CD8-positive, alpha-beta T cell (primary cell): ENCODE measurements at regions of chr1 and their contacts with region 1.

Region 1: GRCh38 chr1:149927503-149928387 is at the start of gene SF3B4:
- DNase-seq: peak; percentile 91 to 98 (median 96)
- ATAC-seq: peak; percentile 94
- H3K4me3 ChIP-seq: peak within 1 kb of the TSS; percentile 86 to 97
- H3K4me3 Mint-ChIP-seq: peak within 1 kb of the TSS; percentile 94
- H3K27ac ChIP-seq: peak within 1 kb of the TSS; percentile 71 to 95
- H3K27ac Mint-ChIP-seq: peak within 1 kb of the TSS; percentile 91
- H3K4me1 ChIP-seq: peaks cover 34% of the 10 kb centered on the region
- H3K4me1 Mint-ChIP-seq: peaks cover 45% of the 10 kb centered on the region
- H3K27me3 ChIP-seq: no peaks in the 10 kb centered on the region
- H3K27me3 Mint-ChIP-seq: peaks cover 2% of the 10 kb centered on the region
- CTCF ChIP-seq: no peak
- total RNA-seq, gene SF3B4: 52.0 to 59.1 TPM

Region 2: GRCh38 chr1:149899460-149900293 is 28.1 kb before region 1 on chr1 and contains the start of gene BOLA1:
- CTCF ChIA-PET with region 1: no interaction called
- POLR2A ChIA-PET with region 1: interaction called, 3 read pairs
- intact Hi-C with region 1: loop called (anchors 1 kb)
- DNase-seq: peak; percentile 56 to 91 (median 85)
- ATAC-seq: peak; percentile 96
- H3K4me3 ChIP-seq: peak within 1 kb of the TSS; percentile 67 to 73
- H3K4me3 Mint-ChIP-seq: peak within 1 kb of the TSS; percentile 89
- H3K27ac ChIP-seq: peak within 1 kb of the TSS; percentile 66 to 82
- H3K27ac Mint-ChIP-seq: peak within 1 kb of the TSS; percentile 92
- H3K4me1 ChIP-seq: peaks cover 11% of the 10 kb centered on the region
- H3K4me1 Mint-ChIP-seq: peaks cover 18% of the 10 kb centered on the region
- H3K27me3 ChIP-seq: no peaks in the 10 kb centered on the region
- H3K27me3 Mint-ChIP-seq: no peaks in the 10 kb centered on the region
- CTCF ChIP-seq: no peak
- total RNA-seq, gene BOLA1: 3.3 to 4.0 TPM

Region 3: GRCh38 chr1:149917571-149918144 is 10.1 kb before region 1 on chr1 and contains the start of gene SV2A:
- CTCF ChIA-PET with region 1: interaction called, 4 read pairs
- POLR2A ChIA-PET with region 1: interaction called, 6 read pairs
- intact Hi-C with region 1: loop called in 1 of 2 experiments (anchors 1 kb)
- DNase-seq: peak in 8 of 9 experiments; percentile 12 to 68 (median 52)
- ATAC-seq: peak; percentile 81
- H3K4me3 ChIP-seq: peak within 1 kb of the TSS; percentile 57 to 66
- H3K4me3 Mint-ChIP-seq: peak within 1 kb of the TSS; percentile 90
- H3K27ac ChIP-seq: no peak within 1 kb of the TSS
- H3K27ac Mint-ChIP-seq: peak within 1 kb of the TSS; percentile 49
- H3K4me1 ChIP-seq: peaks cover 34% of the 10 kb centered on the region
- H3K4me1 Mint-ChIP-seq: peaks cover 46% of the 10 kb centered on the region
- H3K27me3 ChIP-seq: no peaks in the 10 kb centered on the region
- H3K27me3 Mint-ChIP-seq: no peaks in the 10 kb centered on the region
- CTCF ChIP-seq: no peak
- total RNA-seq, gene SV2A: 2.9 to 3.3 TPM

Region 4: DNA sequence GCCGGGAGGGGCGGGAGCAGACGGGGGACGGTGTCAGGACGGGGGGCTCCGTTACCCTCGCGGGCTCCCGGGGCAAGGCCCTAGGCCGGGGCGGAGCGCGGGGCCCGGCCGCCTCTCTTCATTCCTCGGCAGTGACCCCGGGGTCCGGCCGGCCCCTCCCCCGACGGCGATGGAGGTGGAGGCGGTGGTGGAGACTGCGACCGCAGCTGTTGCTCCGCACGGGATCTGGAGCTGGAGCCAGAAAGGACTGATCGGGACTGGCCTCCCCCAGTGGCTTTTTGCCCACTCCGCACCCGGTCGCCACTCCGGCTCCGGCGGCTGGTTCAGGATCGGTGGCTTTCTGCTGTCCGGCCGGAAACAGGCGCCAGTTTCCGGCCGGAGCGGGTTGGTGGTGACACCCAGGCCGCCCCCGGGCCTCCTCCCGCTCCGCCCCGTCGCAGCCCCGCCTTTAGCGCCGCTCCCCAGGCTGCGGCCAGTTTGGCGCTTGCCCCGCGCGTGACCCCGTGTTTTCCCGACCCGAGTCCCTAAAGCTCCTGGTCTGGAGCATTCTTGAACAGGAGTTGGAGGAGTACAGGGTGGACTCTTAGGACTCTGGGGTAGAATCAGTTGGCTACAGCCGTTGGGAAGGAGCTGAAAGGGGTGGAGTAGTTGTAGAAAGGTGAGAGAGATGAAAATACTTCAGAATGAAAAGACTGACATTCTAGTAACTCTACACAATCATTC is 82.8 kb after region 1 on chr1 and contains the start of gene OTUD7B:
- CTCF ChIA-PET with region 1: no interaction called
- POLR2A ChIA-PET with region 1: interaction called, 5 read pairs
- intact Hi-C with region 1: loop called in 1 of 2 experiments (anchors 2 kb)
- DNase-seq: peak; percentile 42 to 82 (median 65)
- ATAC-seq: peak; percentile 82
- H3K4me3 ChIP-seq: peak within 1 kb of the TSS; percentile 88 to 95
- H3K4me3 Mint-ChIP-seq: peak within 1 kb of the TSS; percentile 88
- H3K27ac ChIP-seq: peak within 1 kb of the TSS; percentile 59 to 67
- H3K27ac Mint-ChIP-seq: peak within 1 kb of the TSS; percentile 91
- H3K4me1 ChIP-seq: peaks cover 10% of the 10 kb centered on the region
- H3K4me1 Mint-ChIP-seq: peaks cover 29% of the 10 kb centered on the region
- H3K27me3 ChIP-seq: no peaks in the 10 kb centered on the region
- H3K27me3 Mint-ChIP-seq: no peaks in the 10 kb centered on the region
- CTCF ChIP-seq: no peak
- total RNA-seq, gene OTUD7B: 2.1 to 2.2 TPM